CD8-positive, alpha-beta T cell (primary cell): ENCODE measurements at regions of chr5 and their contacts with region 1.

Region 1: DNA sequence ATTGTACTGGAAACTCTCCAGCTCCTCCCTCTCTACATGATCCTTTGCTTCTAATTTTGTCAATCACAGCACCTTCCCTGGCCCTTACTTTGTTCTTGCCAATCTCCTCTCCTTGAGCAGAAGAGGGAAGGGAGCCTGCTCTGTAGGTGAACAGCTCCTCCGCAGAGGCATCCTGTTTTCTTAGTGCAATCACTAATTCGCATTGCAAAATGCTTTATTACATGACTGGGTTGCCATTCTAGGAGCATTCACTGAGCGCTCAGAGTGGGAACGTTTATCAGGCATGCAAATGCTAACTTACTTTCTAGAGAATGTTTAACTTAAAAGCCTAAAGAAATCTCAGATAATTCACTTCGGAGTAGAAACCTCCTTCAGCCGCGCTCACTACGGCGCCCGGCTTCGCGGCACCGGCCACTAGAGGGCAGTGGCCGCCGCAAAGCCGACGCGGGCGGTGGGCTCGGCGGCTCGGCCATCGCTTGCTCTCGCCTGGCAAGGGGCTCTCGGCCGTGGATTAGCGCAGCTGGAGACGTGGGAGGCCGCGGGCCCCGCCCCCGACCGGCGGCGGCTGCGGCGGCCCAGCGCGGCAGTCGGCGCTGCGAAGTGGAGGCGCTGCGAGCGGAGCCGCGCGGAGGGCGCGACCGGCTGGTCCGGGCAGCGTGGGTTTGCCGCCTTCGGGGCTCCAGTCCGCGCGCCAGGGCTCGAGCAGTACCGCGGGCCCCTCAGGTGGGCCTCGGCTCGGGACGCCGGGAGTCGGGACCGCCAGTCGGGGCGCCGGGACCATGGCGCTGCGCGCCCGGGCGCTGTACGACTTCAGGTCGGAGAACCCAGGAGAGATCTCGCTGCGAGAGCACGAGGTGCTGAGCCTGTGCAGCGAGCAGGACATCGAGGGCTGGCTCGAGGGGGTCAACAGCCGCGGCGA is at the start of gene SNX18:
- DNase-seq: peak; percentile 86 to 96 (median 91)
- ATAC-seq: peak; percentile 90
- H3K4me3 ChIP-seq: peak within 1 kb of the TSS; percentile 72 to 76
- H3K4me3 Mint-ChIP-seq: peak within 1 kb of the TSS; percentile 83
- H3K27ac ChIP-seq: peak within 1 kb of the TSS; percentile 48 to 75
- H3K27ac Mint-ChIP-seq: no peak within 1 kb of the TSS
- H3K4me1 ChIP-seq: peaks cover 33% of the 10 kb centered on the region
- H3K4me1 Mint-ChIP-seq: peaks cover 30% of the 10 kb centered on the region
- H3K27me3 ChIP-seq: peaks cover 0 to 2% of the 10 kb centered on the region in 2 experiments
- H3K27me3 Mint-ChIP-seq: no peaks in the 10 kb centered on the region
- CTCF ChIP-seq: peak; percentile 96
- total RNA-seq, gene SNX18: 12.7 to 12.9 TPM

Region 2: GRCh38 chr5:54296386-54296785 is 221.0 kb before region 1 on chr5:
- CTCF ChIA-PET with region 1: no interaction called
- POLR2A ChIA-PET with region 1: no interaction called
- intact Hi-C with region 1: no loop called
- DNase-seq: no peak
- ATAC-seq: no peak
- H3K4me3 ChIP-seq: no peak overlapping the region
- H3K4me3 Mint-ChIP-seq: no peak overlapping the region
- H3K27ac ChIP-seq: no peak overlapping the region
- H3K27ac Mint-ChIP-seq: no peak overlapping the region
- H3K4me1 ChIP-seq: no peaks in the 10 kb centered on the region
- H3K4me1 Mint-ChIP-seq: peaks cover 51% of the 10 kb centered on the region
- H3K27me3 ChIP-seq: no peaks in the 10 kb centered on the region
- H3K27me3 Mint-ChIP-seq: no peaks in the 10 kb centered on the region
- CTCF ChIP-seq: no peak

Region 3: GRCh38 chr5:54310433-54311175 is 206.8 kb before region 1 on chr5 and contains the start of gene ARL15:
- CTCF ChIA-PET with region 1: interaction called, 3 read pairs
- POLR2A ChIA-PET with region 1: no interaction called
- intact Hi-C with region 1: loop called (anchors 1 to 2 kb)
- DNase-seq: peak; percentile 95 to 99 (median 98)
- ATAC-seq: peak; percentile 92
- H3K4me3 ChIP-seq: peak within 1 kb of the TSS; percentile 96 to 97
- H3K4me3 Mint-ChIP-seq: peak within 1 kb of the TSS; percentile 90
- H3K27ac ChIP-seq: peak within 1 kb of the TSS; percentile 78 to 79
- H3K27ac Mint-ChIP-seq: peak within 1 kb of the TSS; percentile 92
- H3K4me1 ChIP-seq: peaks cover 9% of the 10 kb centered on the region
- H3K4me1 Mint-ChIP-seq: peaks cover 34% of the 10 kb centered on the region
- H3K27me3 ChIP-seq: no peaks in the 10 kb centered on the region
- H3K27me3 Mint-ChIP-seq: peaks cover 6% of the 10 kb centered on the region
- CTCF ChIP-seq: no peak
- total RNA-seq, gene ARL15: 7.4 to 7.5 TPM

Region 4: GRCh38 chr5:54558362-54558761 is 40.9 kb after region 1 on chr5:
- CTCF ChIA-PET with region 1: interaction called, 4 read pairs
- POLR2A ChIA-PET with region 1: no interaction called
- intact Hi-C with region 1: loop called in 1 of 2 experiments (anchors 5 kb)
- DNase-seq: no peak
- ATAC-seq: no peak
- H3K4me3 ChIP-seq: no peak overlapping the region
- H3K4me3 Mint-ChIP-seq: no peak overlapping the region
- H3K27ac ChIP-seq: no peak overlapping the region
- H3K27ac Mint-ChIP-seq: no peak overlapping the region
- H3K4me1 ChIP-seq: no peaks in the 10 kb centered on the region
- H3K4me1 Mint-ChIP-seq: no peaks in the 10 kb centered on the region
- H3K27me3 ChIP-seq: no peaks in the 10 kb centered on the region
- H3K27me3 Mint-ChIP-seq: no peaks in the 10 kb centered on the region
- CTCF ChIP-seq: no peak

Region 5: GRCh38 chr5:54761213-54761701 is 243.8 kb after region 1 on chr5:
- CTCF ChIA-PET with region 1: interaction called, 10 read pairs
- POLR2A ChIA-PET with region 1: no interaction called
- intact Hi-C with region 1: no loop called
- DNase-seq: no peak
- ATAC-seq: no peak
- H3K4me3 ChIP-seq: no peak overlapping the region
- H3K4me3 Mint-ChIP-seq: no peak overlapping the region
- H3K27ac ChIP-seq: no peak overlapping the region
- H3K27ac Mint-ChIP-seq: no peak overlapping the region
- H3K4me1 ChIP-seq: peaks cover 7% of the 10 kb centered on the region
- H3K4me1 Mint-ChIP-seq: peaks cover 11% of the 10 kb centered on the region
- H3K27me3 ChIP-seq: no peaks in the 10 kb centered on the region
- H3K27me3 Mint-ChIP-seq: no peaks in the 10 kb centered on the region
- CTCF ChIP-seq: no peak

Region 6: GRCh38 chr5:54867310-54867944 is 350.0 kb after region 1 on chr5:
- CTCF ChIA-PET with region 1: interaction called, 62 read pairs
- POLR2A ChIA-PET with region 1: interaction called, 17 read pairs
- intact Hi-C with region 1: loop called (anchors 1 kb)
- DNase-seq: peak in 2 of 9 experiments; percentile 63 to 76
- ATAC-seq: peak; percentile 72
- H3K4me3 ChIP-seq: no peak overlapping the region
- H3K4me3 Mint-ChIP-seq: peak overlapping the region; percentile 37
- H3K27ac ChIP-seq: no peak overlapping the region
- H3K27ac Mint-ChIP-seq: no peak overlapping the region
- H3K4me1 ChIP-seq: no peaks in the 10 kb centered on the region
- H3K4me1 Mint-ChIP-seq: peaks cover 4% of the 10 kb centered on the region
- H3K27me3 ChIP-seq: no peaks in the 10 kb centered on the region
- H3K27me3 Mint-ChIP-seq: peaks cover 5% of the 10 kb centered on the region
- CTCF ChIP-seq: peak; percentile 71

Region 7: DNA sequence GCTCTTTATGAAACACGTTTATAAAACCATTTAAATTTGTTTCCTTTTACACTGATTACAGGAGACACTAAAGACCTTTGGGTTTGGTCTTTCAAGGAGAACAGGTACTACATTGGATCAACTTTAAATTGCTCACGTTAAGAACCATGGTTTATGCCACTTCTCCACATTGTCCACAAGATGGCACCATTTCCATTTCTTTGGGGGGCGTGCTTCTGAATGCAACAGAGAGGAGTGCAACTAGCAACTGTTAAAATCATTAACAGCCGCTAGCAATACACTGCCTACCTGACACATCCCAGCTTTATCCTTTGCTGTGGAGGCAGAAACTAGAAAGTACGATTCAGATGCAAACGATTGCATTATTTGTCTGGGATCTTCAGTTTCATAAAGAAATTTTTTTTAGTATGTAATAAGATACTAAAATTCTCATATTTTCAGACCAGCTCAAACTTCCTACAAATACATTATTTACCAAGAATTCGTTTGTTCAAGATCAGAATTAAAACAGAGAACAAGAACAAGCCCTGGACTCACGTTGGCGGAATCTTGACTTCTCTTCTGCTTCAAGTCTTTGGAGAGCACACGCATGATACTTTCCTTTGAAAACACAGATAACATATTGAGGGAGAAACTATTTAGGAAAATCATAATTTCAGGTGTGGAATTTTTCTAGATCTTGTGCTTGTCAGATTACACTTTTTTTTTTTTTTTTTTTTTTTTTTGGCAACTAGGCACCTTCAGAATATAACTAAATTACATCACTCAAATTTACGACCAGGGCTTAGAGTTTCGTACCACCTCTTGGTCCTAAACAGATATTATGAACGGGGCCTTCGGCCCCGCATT is 654.8 kb after region 1 on chr5:
- CTCF ChIA-PET with region 1: no interaction called
- POLR2A ChIA-PET with region 1: interaction called, 3 read pairs
- intact Hi-C with region 1: loop called in 1 of 2 experiments (anchors 5 kb)
- DNase-seq: peak; percentile 30 to 90 (median 56)
- ATAC-seq: peak; percentile 71
- H3K4me3 ChIP-seq: peak overlapping the region; percentile 57 to 59
- H3K4me3 Mint-ChIP-seq: peak overlapping the region; percentile 85
- H3K27ac ChIP-seq: no peak overlapping the region
- H3K27ac Mint-ChIP-seq: no peak overlapping the region
- H3K4me1 ChIP-seq: peaks cover 30% of the 10 kb centered on the region
- H3K4me1 Mint-ChIP-seq: peaks cover 32% of the 10 kb centered on the region
- H3K27me3 ChIP-seq: peaks cover 28 to 30% of the 10 kb centered on the region in 2 experiments
- H3K27me3 Mint-ChIP-seq: peaks cover 63% of the 10 kb centered on the region
- CTCF ChIP-seq: peak; percentile 70

Region 8: DNA sequence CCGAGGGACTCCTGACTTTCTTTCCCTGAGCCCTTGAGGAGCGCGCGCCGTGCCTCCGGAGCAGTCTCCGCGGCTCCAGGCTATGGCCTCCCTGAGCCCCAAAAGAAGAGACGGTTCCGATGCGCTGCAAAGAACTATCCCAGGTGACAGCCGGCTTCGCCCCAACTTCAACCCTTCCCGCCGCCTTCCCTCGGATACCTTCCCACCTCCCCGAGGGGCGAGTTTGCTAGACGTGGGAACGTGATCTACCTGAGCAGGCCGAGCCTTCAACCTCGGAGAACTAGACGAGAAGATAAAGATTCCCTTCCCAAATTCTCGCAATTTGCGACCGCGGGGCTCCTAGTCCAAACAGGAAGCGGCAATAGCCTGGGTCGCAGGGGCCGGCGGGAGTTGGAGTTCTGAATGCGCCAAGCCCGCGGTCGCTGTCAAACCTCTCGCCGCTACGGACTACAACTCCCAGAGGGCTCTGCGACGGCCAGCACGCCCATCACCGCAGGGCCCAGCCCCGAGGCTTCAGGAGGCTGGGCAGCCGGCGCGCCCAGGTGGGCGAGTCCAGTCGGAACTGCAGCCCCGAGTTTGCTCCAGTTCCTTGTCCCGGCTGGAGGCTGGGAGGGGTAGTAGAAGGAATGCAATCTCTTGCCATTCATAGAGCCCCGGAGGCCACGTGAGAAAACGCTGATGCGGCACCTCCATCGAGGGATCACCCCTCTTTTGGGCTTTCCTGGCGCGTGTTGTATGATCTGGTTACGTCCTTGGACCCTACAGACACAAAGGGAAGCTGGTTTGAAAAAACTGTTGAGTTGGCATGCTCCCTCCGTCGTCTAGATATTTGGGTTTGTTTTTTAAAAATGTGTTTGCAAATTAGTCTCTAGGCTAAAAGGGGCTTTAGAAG is 1194.8 kb after region 1 on chr5 and contains the start of gene SLC38A9:
- CTCF ChIA-PET with region 1: no interaction called
- POLR2A ChIA-PET with region 1: no interaction called
- intact Hi-C with region 1: loop called in 1 of 2 experiments (anchors 2 kb)
- DNase-seq: peak; percentile 83 to 94 (median 91)
- ATAC-seq: peak; percentile 99
- H3K4me3 ChIP-seq: peak within 1 kb of the TSS; percentile 92 to 100
- H3K4me3 Mint-ChIP-seq: peak within 1 kb of the TSS; percentile 98
- H3K27ac ChIP-seq: peak within 1 kb of the TSS; percentile 54 to 73
- H3K27ac Mint-ChIP-seq: peak within 1 kb of the TSS; percentile 88
- H3K4me1 ChIP-seq: peaks cover 9% of the 10 kb centered on the region
- H3K4me1 Mint-ChIP-seq: peaks cover 31% of the 10 kb centered on the region
- H3K27me3 ChIP-seq: no peaks in the 10 kb centered on the region
- H3K27me3 Mint-ChIP-seq: peaks cover 3% of the 10 kb centered on the region
- CTCF ChIP-seq: no peak
- total RNA-seq, gene SLC38A9: 6.0 to 6.8 TPM